ENCODE measurements at regions of chr3 and their contacts with region 1.

Region 1: GRCh38 chr3:183697610-183698317 is at the start of gene YEATS2:
- DNase-seq: peak in 1 of 2 experiments; percentile 71
- H3K4me3 ChIP-seq: peak within 1 kb of the TSS; percentile 70
- H3K27ac ChIP-seq: no peak within 1 kb of the TSS
- H3K4me1 ChIP-seq: peaks cover 25% of the 10 kb centered on the region
- H3K27me3 ChIP-seq: no peaks in the 10 kb centered on the region
- CTCF ChIP-seq: no peak
- total RNA-seq, gene YEATS2: 36.5 and 37.2 TPM in 2 replicates

Region 2: DNA sequence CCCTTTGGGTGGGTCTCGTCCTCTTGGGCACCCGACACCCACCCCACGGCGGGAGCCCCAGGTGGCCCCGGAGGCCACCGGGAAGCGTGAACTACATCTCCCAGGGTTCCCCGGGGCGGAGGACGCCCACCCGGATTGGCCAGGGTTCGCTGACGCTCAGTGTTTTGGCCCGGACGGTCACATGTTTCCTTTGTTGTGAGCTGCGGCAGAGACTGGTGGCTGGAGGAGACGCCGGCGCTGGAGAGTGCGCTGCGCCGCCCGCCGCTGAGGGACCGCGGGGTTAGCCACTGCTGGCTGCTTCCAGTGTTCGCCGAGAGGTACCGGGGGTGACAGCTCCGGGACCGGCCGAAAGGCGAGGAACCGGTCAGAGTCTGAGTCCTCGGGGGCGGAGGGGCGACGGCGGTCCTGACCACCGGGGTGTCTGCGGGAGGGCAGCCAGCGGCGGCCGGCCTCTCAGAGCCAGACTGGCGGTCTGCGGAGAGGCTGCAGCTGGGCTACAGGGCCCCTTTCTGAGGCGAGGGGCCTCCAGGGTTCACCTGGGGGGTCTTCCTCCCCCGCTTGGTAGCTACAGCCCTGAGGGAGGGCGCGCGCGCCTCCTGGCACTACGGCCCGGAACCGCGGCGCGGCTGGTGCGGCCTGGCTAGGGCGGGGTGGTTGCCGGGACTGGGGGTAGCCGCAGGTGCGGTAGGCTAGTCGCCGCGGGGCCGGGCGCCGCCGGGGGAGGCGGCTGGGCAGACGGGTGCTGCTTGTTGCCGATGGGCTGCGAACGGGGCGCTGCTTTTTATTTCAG is 62.1 kb before region 1 on chr3 and contains the start of gene KLHL24:
- CTCF ChIA-PET with region 1: interaction called, 4 read pairs
- POLR2A ChIA-PET with region 1: interaction called, 3 read pairs
- intact Hi-C with region 1: loop called (anchors 1 kb)
- DNase-seq: peak; percentile 91 to 96
- H3K4me3 ChIP-seq: peak within 1 kb of the TSS; percentile 85
- H3K27ac ChIP-seq: peak within 1 kb of the TSS; percentile 50
- H3K4me1 ChIP-seq: peaks cover 9% of the 10 kb centered on the region
- H3K27me3 ChIP-seq: no peaks in the 10 kb centered on the region
- CTCF ChIP-seq: peak; percentile 44; the same call in 1 of the 2 replicates
- total RNA-seq, gene KLHL24: 59.1 and 73.0 TPM in 2 replicates

Measured in PC-9 (cell line).